Mammary epithelial cell (primary cell): ENCODE measurements at regions of chr12 and their contacts with region 1.

Region 1: GRCh38 chr12:26097046-26097878 is 27.6 kb downstream of the BHLHE41 start:
- DNase-seq: peak; percentile 72
- H3K4me3 ChIP-seq: no peak overlapping the region
- H3K27ac ChIP-seq: peak overlapping the region; percentile 44
- H3K4me1 ChIP-seq: peaks cover 14% of the 10 kb centered on the region
- H3K27me3 ChIP-seq: no peaks in the 10 kb centered on the region
- CTCF ChIP-seq: peak; percentile 95 to 96

Region 2: GRCh38 chr12:26119391-26119981 is 22.2 kb after region 1 on chr12:
- CTCF ChIA-PET with region 1: interaction called, 5 read pairs
- dilution Hi-C with region 1: no loop called
- in situ Hi-C with region 1: no loop called
- intact Hi-C with region 1: loop called (anchors 1 kb)
- DNase-seq: peak; percentile 68
- H3K4me3 ChIP-seq: no peak overlapping the region
- H3K27ac ChIP-seq: peak overlapping the region; percentile 60
- H3K4me1 ChIP-seq: peaks cover 42% of the 10 kb centered on the region
- H3K27me3 ChIP-seq: no peaks in the 10 kb centered on the region
- CTCF ChIP-seq: peak; percentile 57 to 62

Region 3: DNA sequence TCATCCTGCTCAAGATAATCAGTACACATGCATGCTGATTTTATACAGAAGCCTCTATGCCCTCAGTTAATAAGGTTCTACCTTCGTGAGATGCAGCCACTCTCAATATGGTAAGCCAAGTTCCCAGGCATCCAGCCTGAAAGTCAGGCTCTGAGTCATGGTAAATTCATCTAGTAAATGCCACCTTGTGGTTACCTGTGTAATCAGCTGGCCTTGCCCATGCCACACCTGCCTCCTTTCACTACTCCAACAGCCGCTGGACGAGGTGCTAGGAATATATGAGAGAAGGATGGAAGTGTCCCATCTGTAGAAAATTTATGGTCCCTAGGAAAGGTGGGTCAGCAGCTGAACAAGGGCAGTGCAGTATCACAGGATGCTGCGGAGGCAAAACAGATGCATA is 305.4 kb after region 1 on chr12:
- CTCF ChIA-PET with region 1: interaction called, 3 read pairs
- dilution Hi-C with region 1: no loop called
- in situ Hi-C with region 1: no loop called
- intact Hi-C with region 1: loop called (anchors 2 kb)
- DNase-seq: peak; percentile 94
- H3K4me3 ChIP-seq: no peak overlapping the region
- H3K27ac ChIP-seq: no peak overlapping the region
- H3K4me1 ChIP-seq: peaks cover 14% of the 10 kb centered on the region
- H3K27me3 ChIP-seq: no peaks in the 10 kb centered on the region
- CTCF ChIP-seq: peak; percentile 39 to 57

Region 4: DNA sequence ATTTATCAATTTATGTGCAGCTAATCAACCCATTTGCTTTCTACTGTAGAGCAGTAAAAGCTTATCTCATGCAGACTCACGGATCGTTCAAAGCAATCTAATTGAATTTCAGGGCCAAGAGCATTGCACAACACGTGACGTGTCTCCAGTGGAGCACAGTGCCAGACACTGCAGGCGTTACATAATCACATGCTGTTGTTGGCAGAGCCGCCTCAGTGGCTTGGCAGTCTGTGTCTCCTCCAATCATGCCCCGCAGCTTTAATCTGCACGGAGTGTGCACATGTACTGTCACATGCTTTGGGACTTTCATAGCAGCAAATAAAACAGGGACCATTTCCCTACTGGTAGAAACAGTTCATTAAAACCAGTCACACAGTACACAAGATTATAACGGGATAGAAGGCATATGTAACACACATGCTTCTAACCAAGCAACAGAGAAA is 426.5 kb after region 1 on chr12:
- CTCF ChIA-PET with region 1: no interaction called
- dilution Hi-C with region 1: no loop called
- in situ Hi-C with region 1: no loop called
- intact Hi-C with region 1: loop called (anchors 1 kb)
- DNase-seq: peak; percentile 92
- H3K4me3 ChIP-seq: no peak overlapping the region
- H3K27ac ChIP-seq: no peak overlapping the region
- H3K4me1 ChIP-seq: peaks cover 8% of the 10 kb centered on the region
- H3K27me3 ChIP-seq: no peaks in the 10 kb centered on the region
- CTCF ChIP-seq: no peak

Region 5: GRCh38 chr12:26701604-26702215 is 604.4 kb after region 1 on chr12:
- CTCF ChIA-PET with region 1: no interaction called
- dilution Hi-C with region 1: no loop called
- in situ Hi-C with region 1: no loop called
- intact Hi-C with region 1: loop called (anchors 1 kb)
- DNase-seq: peak; percentile 31
- H3K4me3 ChIP-seq: no peak overlapping the region
- H3K27ac ChIP-seq: no peak overlapping the region
- H3K4me1 ChIP-seq: no peaks in the 10 kb centered on the region
- H3K27me3 ChIP-seq: no peaks in the 10 kb centered on the region
- CTCF ChIP-seq: peak; percentile 43 to 57